ENCODE measurements at regions of chr9 and their contacts with region 1.

Region 1: GRCh38 chr9:96654443-96655197 is 497 bp downstream of the PRXL2C start:
- DNase-seq: peak; percentile 66 to 78 (median 71)
- ATAC-seq: peak; percentile 82
- H3K4me3 ChIP-seq: peak overlapping the region; percentile 70
- H3K27ac ChIP-seq: peak overlapping the region; percentile 76
- H3K4me1 ChIP-seq: peaks cover 5 to 12% of the 10 kb centered on the region in 2 experiments; a peak in 4 of 5 replicates
- H3K27me3 ChIP-seq: no peaks in the 10 kb centered on the region
- CTCF ChIP-seq: peak in 2 of 3 experiments; percentile 24 to 32; a peak in 3 of 6 replicates
- EP300 ChIP-seq: no peak
- POLR2A ChIP-seq: 0 out of 2 replicates have a peak, but pooled peaks have one; percentile 42
- RAD21 ChIP-seq: peak in 1 of 2 experiments; percentile 47; a peak in 2 of 4 replicates

Region 2: DNA sequence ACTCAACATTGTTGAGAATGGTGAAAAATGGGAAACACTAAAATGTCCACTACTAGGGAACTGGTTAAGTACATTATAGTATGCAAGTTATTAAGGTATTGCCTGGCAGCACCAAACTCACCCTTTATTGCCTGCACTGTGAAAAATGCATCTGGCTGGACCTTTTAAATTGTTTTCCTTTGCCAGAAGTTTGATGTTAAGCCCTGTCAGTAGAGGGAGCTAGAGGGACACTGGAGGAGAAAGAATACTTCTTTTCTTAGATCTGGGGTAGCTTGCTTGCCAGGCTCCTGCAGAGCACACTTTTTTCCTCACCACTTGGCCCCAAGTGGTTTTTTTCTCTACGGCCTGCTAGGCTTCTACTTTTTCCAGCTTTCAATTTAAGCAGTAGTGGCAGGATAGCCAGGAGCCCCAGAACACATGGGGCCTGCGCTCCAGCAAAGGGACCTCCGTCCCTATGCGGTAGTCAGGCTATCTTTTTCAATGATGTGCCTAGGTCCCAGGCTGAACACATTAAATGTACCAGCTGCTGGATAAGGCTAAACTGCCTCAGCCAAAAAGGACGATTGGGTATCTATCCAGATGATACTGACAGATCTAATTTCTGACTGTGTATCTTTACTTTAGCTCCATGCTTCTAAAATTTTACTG is 212.7 kb before region 1 on chr9:
- CTCF ChIA-PET with region 1: no interaction called
- POLR2A ChIA-PET with region 1: no interaction called
- in situ Hi-C with region 1: loop called (anchors 25 kb)
- intact Hi-C with region 1: loop called (anchors 5 kb)
- DNase-seq: peak; percentile 30 to 78 (median 38)
- ATAC-seq: peak; percentile 83
- H3K4me3 ChIP-seq: no peak overlapping the region
- H3K27ac ChIP-seq: no peak overlapping the region
- H3K4me1 ChIP-seq: no peaks in the 10 kb centered on the region
- H3K27me3 ChIP-seq: no peaks in the 10 kb centered on the region
- CTCF ChIP-seq: peak; percentile 76 to 90 (median 80)
- EP300 ChIP-seq: no peak
- POLR2A ChIP-seq: no peak
- RAD21 ChIP-seq: peak; percentile 61 to 88

Region 3: DNA sequence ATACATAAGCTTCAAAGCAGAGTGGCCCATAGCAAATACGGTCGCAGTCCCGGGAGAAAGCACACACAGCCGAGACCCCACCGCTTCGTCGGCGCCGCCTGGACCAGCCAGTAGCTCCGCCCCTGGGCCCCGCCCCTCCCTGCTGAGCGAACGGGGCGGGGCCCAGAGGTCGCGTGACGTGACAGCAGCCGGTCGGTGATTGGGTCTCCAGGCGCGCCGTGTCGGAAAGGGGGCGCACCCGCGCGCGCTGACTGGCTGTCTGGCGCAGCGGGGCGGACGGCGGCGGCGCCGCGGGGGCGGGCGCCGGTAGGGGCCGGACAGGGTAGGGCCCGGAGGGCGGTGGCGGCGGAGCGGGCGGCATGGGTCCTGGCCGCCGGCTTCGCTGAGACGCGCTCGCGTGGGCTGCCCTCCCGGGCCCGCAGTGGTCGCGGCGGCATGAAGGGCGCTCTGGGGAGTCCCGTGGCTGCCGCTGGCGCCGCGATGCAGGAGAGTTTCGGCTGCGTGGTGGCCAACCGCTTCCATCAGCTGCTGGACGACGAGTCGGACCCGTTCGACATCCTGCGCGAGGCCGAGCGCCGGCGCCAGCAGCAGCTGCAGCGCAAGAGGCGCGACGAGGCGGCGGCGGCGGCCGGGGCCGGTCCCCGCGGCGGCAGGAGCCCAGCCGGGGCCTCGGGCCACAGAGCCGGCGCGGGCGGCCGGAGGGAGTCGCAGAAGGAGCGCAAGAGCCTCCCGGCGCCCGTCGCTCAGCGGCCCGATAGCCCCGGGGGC is 204.6 kb before region 1 on chr9 and contains the start of gene HABP4:
- CTCF ChIA-PET with region 1: no interaction called
- POLR2A ChIA-PET with region 1: no interaction called
- in situ Hi-C with region 1: loop called (anchors 25 kb)
- intact Hi-C with region 1: no loop called
- DNase-seq: peak; percentile 96 to 99 (median 99)
- ATAC-seq: peak; percentile 100
- H3K4me3 ChIP-seq: peak within 1 kb of the TSS; percentile 58
- H3K27ac ChIP-seq: no peak within 1 kb of the TSS
- H3K4me1 ChIP-seq: peaks cover 2 to 18% of the 10 kb centered on the region in 2 experiments; a peak in 3 of 5 replicates
- H3K27me3 ChIP-seq: peaks cover 2 to 14% of the 10 kb centered on the region in 2 experiments; a peak in 2 of 5 replicates
- CTCF ChIP-seq: peak in 1 of 3 experiments; percentile 8; a peak in 1 of 6 replicates
- EP300 ChIP-seq: no peak
- POLR2A ChIP-seq: no peak
- RAD21 ChIP-seq: no peak
- polyA plus RNA-seq, gene HABP4: 0.38 to 0.52 TPM

Region 4: DNA sequence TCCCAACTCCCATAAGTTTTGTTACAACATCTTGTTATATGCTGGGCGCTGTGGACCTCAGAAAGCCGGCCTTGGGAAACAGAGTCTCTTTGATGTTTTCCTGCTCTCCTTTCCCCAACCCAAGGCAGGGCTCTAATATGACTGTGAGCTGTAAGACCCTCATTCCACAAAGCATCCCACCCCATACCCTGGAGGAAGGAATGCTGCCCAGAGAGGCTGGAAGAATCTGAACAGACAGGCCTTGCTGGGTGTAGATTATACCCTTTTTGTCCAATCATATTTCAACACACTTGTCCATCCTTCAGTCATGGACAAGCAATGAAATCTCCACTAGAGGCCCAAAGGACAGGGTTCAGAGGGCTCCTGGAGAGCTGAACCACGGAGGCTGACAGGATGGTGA is 82.9 kb before region 1 on chr9:
- CTCF ChIA-PET with region 1: no interaction called
- POLR2A ChIA-PET with region 1: no interaction called
- in situ Hi-C with region 1: no loop called
- intact Hi-C with region 1: no loop called
- DNase-seq: no peak
- ATAC-seq: no peak
- H3K4me3 ChIP-seq: no peak overlapping the region
- H3K27ac ChIP-seq: no peak overlapping the region
- H3K4me1 ChIP-seq: peaks cover 7 to 9% of the 10 kb centered on the region in 2 experiments; a peak in 3 of 5 replicates
- H3K27me3 ChIP-seq: peaks cover 4 to 5% of the 10 kb centered on the region in 2 experiments; a peak in 2 of 5 replicates
- CTCF ChIP-seq: no peak
- EP300 ChIP-seq: no peak
- POLR2A ChIP-seq: no peak
- RAD21 ChIP-seq: no peak

Region 5: GRCh38 chr9:96599298-96599697 is 55.3 kb before region 1 on chr9:
- CTCF ChIA-PET with region 1: no interaction called
- POLR2A ChIA-PET with region 1: no interaction called
- in situ Hi-C with region 1: no loop called
- intact Hi-C with region 1: loop called (anchors 10 kb)
- DNase-seq: no peak
- ATAC-seq: no peak
- H3K4me3 ChIP-seq: no peak overlapping the region
- H3K27ac ChIP-seq: no peak overlapping the region
- H3K4me1 ChIP-seq: no peaks in the 10 kb centered on the region
- H3K27me3 ChIP-seq: no peaks in the 10 kb centered on the region
- CTCF ChIP-seq: no peak
- EP300 ChIP-seq: no peak
- POLR2A ChIP-seq: no peak
- RAD21 ChIP-seq: no peak

Region 6: DNA sequence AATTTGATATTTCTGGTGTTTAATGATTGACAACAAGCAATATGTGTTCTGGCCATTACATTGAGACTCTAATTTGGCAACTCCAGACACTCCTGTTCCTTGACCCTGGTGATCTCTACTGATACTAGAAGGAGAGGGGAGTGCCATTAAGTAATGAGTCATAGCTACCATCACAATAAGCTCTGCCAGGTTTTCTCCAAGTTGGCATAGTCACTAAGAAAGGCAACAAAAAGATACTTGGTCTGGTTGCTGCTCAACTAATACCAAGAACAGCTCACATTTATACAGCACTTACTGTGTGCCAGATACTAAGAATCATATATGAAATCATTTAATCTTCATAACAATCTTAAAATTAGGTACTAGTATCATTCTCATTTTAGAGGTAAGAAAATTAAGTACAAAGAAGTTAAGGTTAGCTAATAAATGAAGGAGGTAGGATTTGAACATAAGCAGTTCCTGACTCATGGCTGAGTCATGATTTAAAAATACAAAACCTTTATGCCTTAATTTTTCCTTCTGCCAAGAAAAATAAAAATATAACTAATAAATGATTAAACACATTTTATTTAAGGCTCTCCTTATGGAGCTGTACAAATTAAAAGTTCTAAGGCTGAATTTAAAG is 20.4 kb after region 1 on chr9:
- CTCF ChIA-PET with region 1: no interaction called
- POLR2A ChIA-PET with region 1: no interaction called
- in situ Hi-C with region 1: no loop called
- intact Hi-C with region 1: no loop called
- DNase-seq: no peak
- ATAC-seq: no peak
- H3K4me3 ChIP-seq: no peak overlapping the region
- H3K27ac ChIP-seq: no peak overlapping the region
- H3K4me1 ChIP-seq: peaks cover 0 to under 1% of the 10 kb centered on the region in 2 experiments; a peak in 3 of 5 replicates
- H3K27me3 ChIP-seq: no peaks in the 10 kb centered on the region
- CTCF ChIP-seq: no peak
- EP300 ChIP-seq: no peak
- POLR2A ChIP-seq: no peak
- RAD21 ChIP-seq: no peak